ENCODE measurements at regions of chr3 and their contacts with region 1.

Region 1: GRCh38 chr3:158790901-158791589 is 10.8 kb upstream of the MFSD1 start:
- DNase-seq: peak; percentile 57
- H3K4me3 Mint-ChIP-seq: peak overlapping the region; percentile 49
- H3K27ac Mint-ChIP-seq: no peak overlapping the region
- H3K4me1 Mint-ChIP-seq: peaks cover 6% of the 10 kb centered on the region
- H3K27me3 Mint-ChIP-seq: peaks cover 8% of the 10 kb centered on the region

Region 2: DNA sequence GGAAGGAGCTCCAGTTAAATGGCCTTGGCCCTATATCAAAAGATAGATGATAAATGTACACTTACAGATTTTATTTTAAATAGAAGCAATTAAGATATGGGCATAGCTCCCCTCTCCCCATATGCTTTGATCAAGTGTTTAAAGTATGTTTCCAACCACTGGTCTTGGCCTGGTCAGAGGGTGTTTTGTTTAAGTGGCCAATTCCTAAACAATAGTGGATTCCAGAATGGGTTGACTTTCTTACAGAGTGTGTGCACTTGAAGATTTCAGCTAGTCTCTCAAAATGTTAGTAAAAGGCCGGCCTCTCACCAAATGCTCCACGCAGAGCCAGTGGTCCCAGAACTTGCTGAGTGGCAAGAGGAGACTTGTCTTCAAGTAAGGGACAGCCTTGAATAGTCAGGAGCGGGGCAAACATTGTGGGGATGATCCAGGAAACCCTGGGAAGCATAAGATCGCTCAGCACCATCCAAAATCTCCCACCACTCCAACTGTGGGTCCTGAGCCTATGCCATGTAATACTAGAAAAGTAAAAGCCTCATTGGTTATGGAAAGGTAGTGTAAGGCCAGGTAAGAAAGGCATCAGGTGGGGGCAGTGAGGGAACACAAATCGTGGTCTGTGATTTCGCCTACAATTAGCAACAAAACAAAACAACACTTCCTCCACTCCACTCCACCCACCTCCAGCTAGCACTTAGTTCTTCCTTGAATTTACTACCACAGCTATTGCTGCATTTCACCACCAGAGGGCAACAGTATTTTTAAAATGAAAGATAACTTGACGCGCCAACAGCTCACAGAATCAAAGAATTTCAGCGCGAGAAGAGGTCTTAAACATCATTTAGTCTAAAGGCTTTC is 63.6 kb before region 1 on chr3:
- CTCF ChIA-PET with region 1: interaction called, 11 read pairs
- POLR2A ChIA-PET with region 1: no interaction called
- DNase-seq: peak; percentile 71
- H3K4me3 Mint-ChIP-seq: peak overlapping the region; percentile 12
- H3K27ac Mint-ChIP-seq: peak overlapping the region; percentile 63
- H3K4me1 Mint-ChIP-seq: peaks cover 34% of the 10 kb centered on the region
- H3K27me3 Mint-ChIP-seq: no peaks in the 10 kb centered on the region

Region 3: DNA sequence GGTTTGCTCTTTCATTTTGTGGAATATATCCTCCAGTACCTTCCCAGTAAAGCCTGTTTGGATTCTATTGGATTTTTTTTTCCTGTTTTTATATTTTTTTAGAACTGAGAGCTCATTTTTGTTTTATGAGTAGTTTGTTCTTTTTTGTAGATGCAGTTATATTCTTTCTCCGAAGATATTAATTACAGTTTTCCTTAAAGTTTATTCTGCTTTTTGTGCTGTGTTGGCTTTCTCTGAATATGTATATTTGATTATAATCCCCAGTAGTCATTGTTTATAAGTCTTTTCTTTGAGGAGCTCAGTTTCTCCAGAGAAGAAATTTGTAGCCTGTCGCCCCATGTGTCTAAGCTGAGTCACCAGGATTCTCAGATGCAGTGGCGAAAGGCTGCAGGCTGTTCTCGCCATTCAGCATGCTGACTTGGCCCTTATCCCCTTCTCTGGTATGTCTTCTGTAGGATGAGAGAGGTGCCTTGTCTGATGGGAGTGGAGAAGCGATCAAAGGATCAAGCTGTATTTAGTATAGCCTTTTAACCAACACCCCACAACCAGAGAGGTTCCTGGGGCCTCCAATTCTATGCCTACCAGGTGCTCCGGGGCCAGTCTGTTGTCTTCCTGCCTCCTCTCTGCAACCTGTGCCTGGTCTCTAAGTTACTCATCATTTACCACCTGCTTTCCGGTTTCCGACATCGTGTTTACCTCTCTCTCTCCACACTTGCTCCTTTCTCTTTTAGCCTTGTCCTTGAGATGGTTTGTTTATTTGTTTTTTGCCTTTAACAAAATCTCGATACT is 20.9 kb before region 1 on chr3:
- CTCF ChIA-PET with region 1: no interaction called
- POLR2A ChIA-PET with region 1: no interaction called
- DNase-seq: no peak
- H3K4me3 Mint-ChIP-seq: no peak overlapping the region
- H3K27ac Mint-ChIP-seq: no peak overlapping the region
- H3K4me1 Mint-ChIP-seq: no peaks in the 10 kb centered on the region
- H3K27me3 Mint-ChIP-seq: no peaks in the 10 kb centered on the region